Calu3 (cell line): ENCODE measurements at regions of chr4 and their contacts with region 1.

Region 1: GRCh38 chr4:155094201-155094820 is 114.1 kb upstream of the NPY2R start:
- DNase-seq: no peak
- H3K4me3 Mint-ChIP-seq: no peak overlapping the region
- H3K27ac Mint-ChIP-seq: no peak overlapping the region
- H3K4me1 Mint-ChIP-seq: no peaks in the 10 kb centered on the region
- H3K27me3 Mint-ChIP-seq: no peaks in the 10 kb centered on the region
- CTCF ChIP-seq: no peak

Region 2: DNA sequence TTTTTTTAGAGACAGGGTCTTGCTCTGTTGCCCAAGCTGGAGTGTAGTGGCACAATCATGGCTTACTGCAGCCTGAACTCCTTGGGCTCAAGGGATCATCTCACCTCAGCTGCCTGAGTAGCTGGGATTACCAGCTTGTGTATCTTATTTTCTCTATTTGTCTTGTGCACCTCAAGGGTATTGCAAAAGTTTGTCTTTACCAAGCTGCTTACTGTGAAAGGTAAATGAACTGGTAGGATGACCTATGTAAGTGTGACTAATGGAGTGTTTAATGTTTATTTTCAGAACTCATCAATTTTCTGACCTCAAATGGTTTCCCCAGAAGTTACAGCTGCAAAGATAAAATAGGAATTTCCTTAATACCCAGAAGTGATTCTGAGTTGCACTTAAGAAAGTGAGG is 498.5 kb before region 1 on chr4:
- CTCF ChIA-PET with region 1: no interaction called
- intact Hi-C with region 1: no loop called
- DNase-seq: no peak
- H3K4me3 Mint-ChIP-seq: no peak overlapping the region
- H3K27ac Mint-ChIP-seq: no peak overlapping the region
- H3K4me1 Mint-ChIP-seq: peaks cover 8% of the 10 kb centered on the region
- H3K27me3 Mint-ChIP-seq: no peaks in the 10 kb centered on the region
- CTCF ChIP-seq: no peak

Region 3: DNA sequence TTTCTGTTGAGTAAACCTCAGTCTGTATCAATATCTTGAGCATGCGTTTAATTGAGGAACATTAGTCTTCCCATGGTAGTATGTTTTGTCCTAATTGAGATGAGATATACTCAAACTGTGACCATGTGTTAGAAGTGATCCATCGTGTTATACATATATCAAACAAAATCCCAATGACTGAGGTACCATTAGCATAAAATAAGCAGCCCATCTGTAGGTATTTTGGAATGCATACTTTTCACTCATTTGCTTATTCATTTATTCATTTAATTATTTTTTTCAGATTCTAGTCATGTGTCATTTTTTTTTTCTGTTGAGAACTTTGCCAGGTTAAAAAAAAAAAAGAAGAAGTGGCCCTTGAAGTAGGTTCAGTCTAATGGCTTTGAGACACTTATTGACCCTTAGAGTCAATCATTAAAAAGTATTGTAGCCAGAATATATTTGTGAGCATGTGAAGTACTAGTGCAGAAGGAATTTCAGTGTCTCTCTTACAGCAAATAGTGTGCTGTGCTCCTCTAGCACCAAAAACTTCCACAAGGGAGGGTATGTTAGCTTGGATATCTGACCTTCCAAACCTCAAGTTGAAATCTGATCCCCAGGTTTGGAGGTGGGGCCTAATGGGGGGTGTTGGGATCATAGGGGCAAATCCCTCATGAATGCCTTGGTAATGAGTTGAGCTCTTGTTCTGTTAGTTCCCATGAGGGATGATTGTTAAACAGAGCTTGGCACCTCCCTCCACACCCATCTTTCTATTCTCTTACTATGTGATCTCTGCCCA is 16.7 kb before region 1 on chr4:
- CTCF ChIA-PET with region 1: no interaction called
- intact Hi-C with region 1: loop called (anchors 1 kb)
- DNase-seq: no peak
- H3K4me3 Mint-ChIP-seq: no peak overlapping the region
- H3K27ac Mint-ChIP-seq: no peak overlapping the region
- H3K4me1 Mint-ChIP-seq: no peaks in the 10 kb centered on the region
- H3K27me3 Mint-ChIP-seq: no peaks in the 10 kb centered on the region
- CTCF ChIP-seq: no peak

Region 4: GRCh38 chr4:155207534-155208257 is 113.4 kb after region 1 on chr4:
- CTCF ChIA-PET with region 1: no interaction called
- intact Hi-C with region 1: no loop called
- DNase-seq: no peak
- H3K4me3 Mint-ChIP-seq: no peak overlapping the region
- H3K27ac Mint-ChIP-seq: no peak overlapping the region
- H3K4me1 Mint-ChIP-seq: no peaks in the 10 kb centered on the region
- H3K27me3 Mint-ChIP-seq: no peaks in the 10 kb centered on the region
- CTCF ChIP-seq: no peak